ENCODE measurements at regions of chr5 and their contacts with region 1.

Region 1: DNA sequence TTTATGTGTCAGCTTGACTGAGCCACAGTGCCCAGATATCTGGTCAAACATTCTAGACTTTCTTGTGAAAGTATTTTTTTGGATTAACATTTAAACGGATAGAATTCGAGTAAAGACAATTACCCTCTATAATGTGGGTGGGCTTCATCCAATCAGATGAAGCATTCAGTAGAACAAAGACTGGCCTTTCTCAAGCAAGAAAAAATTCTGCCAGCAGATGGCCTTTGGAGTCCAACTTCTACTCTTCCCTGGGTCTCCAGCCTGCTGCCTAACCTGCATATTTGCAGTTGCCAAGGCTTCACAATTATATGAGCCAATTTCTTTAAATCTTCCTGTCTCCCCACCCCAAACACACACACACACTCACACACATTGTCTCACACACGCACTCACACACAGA is 86.4 kb downstream of the MED10 start:
- DNase-seq: no peak
- ATAC-seq: peak; percentile 60

Region 2: GRCh38 chr5:6435356-6435755 is 143.4 kb after region 1 on chr5:
- intact Hi-C with region 1: loop called (anchors 10 kb)
- DNase-seq: peak; percentile 49
- ATAC-seq: no peak

Region 3: GRCh38 chr5:6525910-6526309 is 233.9 kb after region 1 on chr5:
- intact Hi-C with region 1: loop called (anchors 5 kb)
- DNase-seq: no peak
- ATAC-seq: peak; percentile 87

Measured in Right ventricle myocardium superior (tissue), 1 donor.